Left cardiac atrium (tissue), 4 donors: ENCODE measurements at regions of chr4 and their contacts with region 1.

Region 1: DNA sequence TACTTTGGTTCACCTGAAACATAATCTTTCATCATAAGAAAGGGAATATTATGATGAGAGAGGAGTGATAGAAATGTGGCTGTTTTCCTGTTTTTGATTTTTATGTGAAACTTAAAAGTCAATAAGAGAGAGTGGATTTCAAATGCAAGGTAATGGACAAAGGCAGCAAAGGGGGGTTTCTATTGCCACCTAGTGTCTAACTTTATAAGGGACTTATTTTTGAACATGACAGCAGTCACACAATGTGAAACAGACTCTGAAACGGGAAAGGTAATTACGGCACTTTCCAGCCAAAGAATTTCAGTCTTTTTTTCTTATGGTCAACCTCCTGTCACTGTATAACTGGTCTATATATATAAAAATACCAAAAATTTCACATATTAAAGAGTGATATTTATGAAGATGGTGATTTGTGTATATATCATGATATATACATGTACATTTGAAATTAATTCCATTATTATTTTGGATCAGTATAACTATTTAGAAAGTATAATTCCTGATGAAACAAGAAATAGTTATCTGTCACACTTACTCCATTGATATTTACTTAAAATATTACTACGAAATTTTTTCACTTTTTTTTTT is 127.1 kb downstream of the FBXO8 start:
- DNase-seq: no peak
- ATAC-seq: peak; percentile 77 to 78

Region 2: GRCh38 chr4:173748353-173748752 is 408.0 kb before region 1 on chr4:
- intact Hi-C with region 1: loop called in 1 of 2 experiments (anchors 5 kb)
- DNase-seq: no peak
- ATAC-seq: peak; percentile 38 to 44

Region 3: DNA sequence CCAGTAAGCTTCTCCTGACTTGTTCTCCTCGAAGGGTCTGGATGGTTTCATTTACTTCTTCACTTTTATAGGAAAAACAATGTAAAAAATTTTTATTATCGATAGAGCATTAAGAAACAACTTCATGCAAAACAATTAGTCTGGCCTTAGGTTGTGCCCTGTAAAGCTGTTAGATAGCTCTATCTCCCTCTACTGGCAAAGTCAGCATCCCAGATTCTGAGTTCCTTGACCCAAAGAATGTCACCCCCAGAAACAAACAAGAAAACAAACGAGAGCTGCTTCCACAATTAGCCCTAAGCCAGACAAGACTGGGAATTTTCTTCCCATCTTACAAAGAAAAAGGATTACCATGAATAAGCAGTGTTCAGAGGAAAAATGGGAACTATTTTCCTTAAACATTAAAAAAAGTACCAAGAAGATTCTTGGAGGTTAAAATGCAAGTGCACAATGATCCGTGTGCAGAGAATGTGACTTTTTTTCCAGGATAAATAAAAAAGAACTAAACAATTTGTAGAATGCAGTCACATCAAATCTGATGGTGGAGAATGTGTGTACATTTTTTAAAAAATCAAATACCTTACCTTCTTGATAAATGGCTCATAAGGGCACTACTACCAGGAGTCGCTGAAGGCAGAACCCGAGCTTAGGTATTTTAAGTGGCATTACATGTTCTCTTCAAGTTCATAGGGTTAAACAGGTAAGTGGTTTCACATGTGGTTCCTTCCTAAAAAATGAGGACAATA is 166.0 kb before region 1 on chr4:
- intact Hi-C with region 1: loop called in 1 of 2 experiments (anchors 5 kb)
- DNase-seq: no peak
- ATAC-seq: peak; percentile 77 to 87

Region 4: DNA sequence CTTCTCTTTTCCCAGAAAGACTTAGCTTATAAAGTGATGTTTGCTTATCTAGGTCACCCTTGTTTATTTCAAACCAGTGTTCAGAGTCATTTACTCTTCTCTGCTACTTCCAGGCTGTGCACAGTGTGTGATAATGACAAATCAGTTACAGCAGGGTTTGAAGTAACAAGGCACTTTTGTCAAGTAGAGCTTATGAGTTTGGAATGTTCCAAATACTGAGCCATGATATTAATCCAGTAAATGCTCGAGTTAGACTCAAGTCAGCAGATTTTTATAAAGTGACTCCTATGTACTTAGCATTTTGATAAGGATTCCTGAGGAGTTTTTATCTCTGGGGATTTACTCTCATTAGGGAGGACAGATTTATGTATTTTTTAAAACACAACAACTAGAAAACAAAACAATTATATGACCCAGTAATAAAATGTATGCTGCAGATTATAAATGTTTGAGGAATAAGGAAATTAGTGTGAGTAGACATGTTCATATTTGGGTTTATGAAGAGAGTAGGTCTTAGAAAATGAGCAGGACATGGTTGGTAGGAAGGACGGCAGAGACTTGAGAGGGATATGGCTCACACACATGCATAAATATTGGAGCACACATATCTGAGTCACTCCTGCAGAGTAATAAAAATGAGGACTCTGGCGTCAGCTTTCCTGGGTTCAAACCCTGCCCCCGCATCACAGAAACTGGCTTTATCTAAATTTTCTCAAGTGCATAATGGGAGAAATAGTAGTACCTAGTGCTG is 144.0 kb before region 1 on chr4:
- intact Hi-C with region 1: loop called in 1 of 2 experiments (anchors 5 kb)
- DNase-seq: no peak
- ATAC-seq: peak; percentile 82 to 93

Region 5: GRCh38 chr4:174080361-174080760 is 76.0 kb before region 1 on chr4:
- intact Hi-C with region 1: no loop called
- DNase-seq: no peak
- ATAC-seq: peak in 1 of 2 donors; percentile 62

Region 6: DNA sequence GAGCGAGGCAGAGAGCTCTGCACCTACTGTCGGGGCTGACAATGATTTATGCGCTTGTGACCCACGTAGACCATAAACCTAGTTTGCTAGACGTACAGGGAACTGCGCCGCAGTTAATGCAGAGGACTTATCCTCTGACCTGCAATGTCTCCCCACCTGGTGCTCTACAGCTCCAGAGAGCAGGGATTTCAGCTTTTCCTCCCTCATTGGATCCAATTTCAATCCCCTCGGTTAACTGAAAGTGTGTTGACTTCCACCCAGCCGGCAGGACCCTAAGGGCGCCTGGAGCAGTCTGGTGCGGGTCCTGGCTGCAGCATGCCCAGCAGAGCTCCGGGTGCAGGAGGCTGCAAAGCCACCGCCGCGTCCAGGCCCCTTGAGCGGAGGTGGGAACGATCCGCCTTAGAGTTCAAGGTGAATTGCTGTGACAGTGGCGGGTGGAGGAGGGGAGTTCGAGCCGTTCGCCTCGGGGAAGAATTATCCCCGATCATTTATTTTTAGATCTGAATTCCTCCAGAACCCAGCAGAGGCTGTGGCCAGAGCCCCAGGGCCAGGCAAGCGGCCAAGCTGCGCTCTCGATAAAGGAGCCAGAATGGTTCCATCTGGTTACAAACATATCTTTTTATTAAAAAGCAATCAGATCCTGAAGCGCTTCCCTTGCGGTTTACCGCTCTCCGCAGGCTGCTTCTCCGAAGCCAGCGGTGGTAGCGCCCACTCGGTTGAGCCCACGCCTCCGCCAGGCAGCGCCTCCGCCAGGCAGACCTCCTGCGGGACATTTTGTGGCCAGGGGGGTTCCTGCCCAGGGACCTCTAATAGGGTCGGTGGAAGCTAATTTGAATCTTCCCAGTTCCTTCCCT is 61.2 kb after region 1 on chr4:
- intact Hi-C with region 1: loop called in 1 of 2 experiments (anchors 5 kb)
- DNase-seq: peak; percentile 45
- ATAC-seq: peak; percentile 61 to 76

Region 7: GRCh38 chr4:174490451-174490870 is 334.1 kb after region 1 on chr4:
- intact Hi-C with region 1: no loop called
- DNase-seq: no peak
- ATAC-seq: peak in 1 of 2 donors; percentile 61